PC-9 (cell line): ENCODE measurements at regions of chr5 and their contacts with region 1.

Region 1: GRCh38 chr5:141992349-141992963 is 20.4 kb downstream of the GNPDA1 start:
- DNase-seq: peak; percentile 55 to 60
- H3K4me3 ChIP-seq: no peak overlapping the region
- H3K27ac ChIP-seq: no peak overlapping the region
- H3K4me1 ChIP-seq: no peaks in the 10 kb centered on the region
- H3K27me3 ChIP-seq: no peaks in the 10 kb centered on the region
- CTCF ChIP-seq: peak; percentile 90

Region 2: GRCh38 chr5:142024771-142025304 is 32.4 kb after region 1 on chr5:
- CTCF ChIA-PET with region 1: no interaction called
- POLR2A ChIA-PET with region 1: no interaction called
- intact Hi-C with region 1: no loop called
- DNase-seq: peak; percentile 84 to 92
- H3K4me3 ChIP-seq: peak overlapping the region; percentile 62
- H3K27ac ChIP-seq: peak overlapping the region; percentile 80
- H3K4me1 ChIP-seq: peaks cover 40% of the 10 kb centered on the region
- H3K27me3 ChIP-seq: no peaks in the 10 kb centered on the region
- CTCF ChIP-seq: no peak

Region 3: DNA sequence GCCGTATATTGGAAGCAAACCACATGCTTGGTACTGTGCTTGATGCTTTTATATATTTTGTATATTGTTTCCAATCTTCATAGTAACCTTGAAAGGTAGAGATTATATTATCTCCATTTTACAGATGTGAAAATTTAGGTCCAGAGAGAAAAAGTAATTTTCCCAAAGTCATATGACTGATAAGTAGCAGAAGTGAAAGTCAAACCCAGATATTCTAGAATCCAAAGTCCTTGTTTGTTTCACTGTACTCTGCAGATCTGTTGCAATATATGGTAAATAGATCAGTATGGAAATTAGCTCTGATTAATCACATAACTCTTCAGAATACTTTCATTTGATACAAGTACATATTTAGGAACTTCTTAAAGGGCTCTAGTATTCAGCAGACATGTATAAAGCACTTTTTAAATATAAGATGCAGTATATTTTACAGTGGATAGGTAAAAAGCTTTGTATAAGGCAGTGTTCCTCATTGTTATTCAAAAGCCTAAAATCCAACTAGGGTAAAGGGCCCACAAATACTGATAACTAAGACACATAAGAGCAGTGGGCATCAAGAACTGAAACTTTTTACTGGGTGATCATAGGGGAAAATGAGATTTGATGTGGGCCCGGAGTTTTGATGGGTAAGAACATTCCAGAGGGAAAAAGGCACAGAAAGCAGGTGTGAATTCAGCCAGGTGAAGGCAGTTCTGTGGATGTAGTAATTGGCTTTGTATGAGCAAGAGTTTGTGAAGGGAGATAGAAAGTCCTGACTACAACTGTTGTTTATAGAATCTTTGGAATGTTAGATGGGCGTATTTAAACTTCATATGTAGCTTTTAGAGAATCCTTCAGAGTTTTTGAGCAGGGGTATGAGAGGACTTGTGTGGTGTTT is 141.1 kb after region 1 on chr5:
- CTCF ChIA-PET with region 1: interaction called, 11 read pairs
- POLR2A ChIA-PET with region 1: no interaction called
- intact Hi-C with region 1: no loop called
- DNase-seq: no peak
- H3K4me3 ChIP-seq: no peak overlapping the region
- H3K27ac ChIP-seq: no peak overlapping the region
- H3K4me1 ChIP-seq: no peaks in the 10 kb centered on the region
- H3K27me3 ChIP-seq: no peaks in the 10 kb centered on the region
- CTCF ChIP-seq: no peak